Posterior vena cava (tissue), 2 donors: ENCODE measurements at regions of chr17 and their contacts with region 1.

Region 1: GRCh38 chr17:41738077-41738735 is 3.8 kb upstream of the HAP1 start:
- DNase-seq: peak; percentile 93

Region 2: GRCh38 chr17:41705271-41705991 is 32.8 kb before region 1 on chr17:
- intact Hi-C with region 1: no loop called
- DNase-seq: no peak

Region 3: DNA sequence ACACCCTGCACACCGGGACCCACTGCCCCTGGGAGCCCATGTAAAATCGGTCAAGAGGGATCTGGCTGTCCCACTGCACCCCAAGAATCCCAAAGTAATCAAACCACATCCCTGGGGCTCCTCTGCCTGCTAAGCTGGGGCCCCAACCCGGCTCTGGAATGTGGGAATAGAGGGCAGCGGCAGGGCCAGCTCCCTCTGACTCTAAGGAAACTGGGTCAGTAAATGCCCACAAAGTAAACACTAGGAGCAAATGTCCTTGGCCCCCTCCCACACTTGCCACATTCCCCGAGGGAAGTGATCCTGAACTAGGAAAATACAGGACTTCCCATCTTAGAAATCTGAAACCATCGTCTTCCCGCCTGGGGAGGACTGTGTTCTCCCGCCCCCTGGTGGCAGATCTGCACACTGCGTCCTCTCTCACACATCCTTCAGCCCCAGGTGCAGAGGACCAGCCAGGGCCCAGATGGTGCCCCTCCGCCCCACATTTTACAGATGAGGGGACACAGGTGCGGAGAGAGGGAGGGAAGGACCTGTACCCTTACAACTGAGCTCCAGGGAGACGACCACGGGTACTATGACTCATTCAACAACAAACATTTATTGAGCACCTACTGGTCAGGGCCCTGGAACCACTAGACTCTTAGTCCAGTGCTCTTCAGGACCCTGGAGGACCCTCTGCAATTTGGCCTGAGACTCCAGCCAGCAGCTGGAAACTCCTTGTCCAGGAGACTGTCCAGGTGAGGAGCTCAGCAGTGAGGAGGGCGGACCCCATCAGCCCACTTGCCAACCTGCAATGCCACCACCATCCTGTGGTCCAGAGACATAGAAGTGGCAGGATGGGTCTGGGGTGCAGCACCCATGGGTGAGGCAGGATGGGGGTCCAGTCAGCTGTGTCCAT is 63.4 kb after region 1 on chr17:
- intact Hi-C with region 1: loop called (anchors 2 kb)
- DNase-seq: peak; percentile 94